PC-9 (cell line): ENCODE measurements at regions of chr19 and their contacts with region 1.

Region 1: DNA sequence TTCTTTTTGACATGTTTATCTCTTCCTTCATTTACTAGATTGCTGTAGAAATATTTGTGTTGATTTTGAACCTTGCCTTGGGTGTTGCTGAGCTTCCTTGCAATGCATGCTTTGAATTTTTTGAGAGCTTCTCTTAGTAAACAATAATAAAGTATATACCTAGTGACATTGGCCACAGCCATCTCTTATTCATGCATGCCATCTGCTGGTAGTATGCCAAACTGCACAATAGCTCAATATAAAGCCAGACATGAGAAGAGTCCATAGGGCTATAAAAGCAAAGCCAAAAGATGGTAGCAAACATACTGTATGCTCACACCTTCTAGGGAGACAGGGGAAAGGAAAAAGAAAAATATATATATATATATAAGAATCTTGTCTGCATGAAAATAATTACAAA is 18.9 kb upstream of the ZSCAN5A start:
- DNase-seq: peak; percentile 61 to 66
- H3K4me3 ChIP-seq: no peak overlapping the region
- H3K27ac ChIP-seq: no peak overlapping the region
- H3K4me1 ChIP-seq: no peaks in the 10 kb centered on the region
- H3K27me3 ChIP-seq: peaks cover 41% of the 10 kb centered on the region
- CTCF ChIP-seq: peak; percentile 95

Region 2: GRCh38 chr19:54653181-54653809 is 1680.2 kb before region 1 on chr19:
- CTCF ChIA-PET with region 1: no interaction called
- POLR2A ChIA-PET with region 1: no interaction called
- intact Hi-C with region 1: loop called (anchors 5 kb)
- DNase-seq: no peak
- H3K4me3 ChIP-seq: no peak overlapping the region
- H3K27ac ChIP-seq: no peak overlapping the region
- H3K4me1 ChIP-seq: no peaks in the 10 kb centered on the region
- H3K27me3 ChIP-seq: peaks cover 43% of the 10 kb centered on the region
- CTCF ChIP-seq: peak; percentile 86

Region 3: GRCh38 chr19:56066152-56067023 is 267.1 kb before region 1 on chr19:
- CTCF ChIA-PET with region 1: interaction called, 36 read pairs
- POLR2A ChIA-PET with region 1: no interaction called
- intact Hi-C with region 1: loop called (anchors 1 kb)
- DNase-seq: peak; percentile 51 to 71
- H3K4me3 ChIP-seq: no peak overlapping the region
- H3K27ac ChIP-seq: no peak overlapping the region
- H3K4me1 ChIP-seq: no peaks in the 10 kb centered on the region
- H3K27me3 ChIP-seq: peaks cover 56% of the 10 kb centered on the region
- CTCF ChIP-seq: peak; percentile 94

Region 4: GRCh38 chr19:56080669-56081401 is 252.7 kb before region 1 on chr19:
- CTCF ChIA-PET with region 1: interaction called, 17 read pairs
- POLR2A ChIA-PET with region 1: no interaction called
- intact Hi-C with region 1: loop called (anchors 1 kb)
- DNase-seq: peak in 1 of 2 experiments; percentile 77
- H3K4me3 ChIP-seq: no peak overlapping the region
- H3K27ac ChIP-seq: no peak overlapping the region
- H3K4me1 ChIP-seq: no peaks in the 10 kb centered on the region
- H3K27me3 ChIP-seq: no peaks in the 10 kb centered on the region
- CTCF ChIP-seq: peak; percentile 64

Region 5: DNA sequence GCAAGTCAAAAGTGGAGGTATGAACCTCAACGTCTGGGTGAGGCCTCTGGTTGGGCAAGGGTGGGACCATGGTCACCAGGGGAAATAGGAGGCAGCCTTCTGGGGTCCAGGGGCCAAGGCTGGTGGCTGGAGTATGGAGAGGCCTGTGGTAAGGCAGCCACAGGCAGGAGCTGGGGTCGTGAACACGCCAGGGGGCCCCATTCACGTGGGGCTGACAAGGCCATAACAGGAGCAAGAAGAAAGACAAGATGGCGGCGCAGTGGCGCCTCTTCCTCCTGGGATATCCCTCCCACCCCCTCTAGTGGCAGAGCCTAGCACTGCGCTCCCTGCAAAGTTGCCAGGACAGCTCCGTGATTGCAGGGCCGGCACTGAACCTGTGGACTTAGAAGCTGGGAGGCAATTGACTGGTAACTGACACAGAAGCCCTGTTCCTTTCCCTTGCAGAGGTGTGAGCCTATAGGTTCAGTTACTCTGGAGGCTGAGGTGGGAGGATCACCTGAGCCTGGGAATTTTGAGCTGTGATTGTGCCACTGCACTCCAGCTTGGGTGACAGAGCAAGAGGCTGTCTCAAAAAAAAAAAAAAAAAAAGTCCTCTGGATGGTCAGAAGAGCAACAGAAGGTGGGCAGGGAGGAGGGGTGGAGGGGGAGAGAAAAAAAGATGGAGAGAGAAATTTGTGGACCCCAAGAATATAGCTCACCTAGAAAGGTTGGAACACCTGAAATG is 80.6 kb before region 1 on chr19:
- CTCF ChIA-PET with region 1: interaction called, 87 read pairs
- POLR2A ChIA-PET with region 1: no interaction called
- intact Hi-C with region 1: loop called (anchors 1 kb)
- DNase-seq: peak; percentile 56 to 82
- H3K4me3 ChIP-seq: no peak overlapping the region
- H3K27ac ChIP-seq: no peak overlapping the region
- H3K4me1 ChIP-seq: no peaks in the 10 kb centered on the region
- H3K27me3 ChIP-seq: no peaks in the 10 kb centered on the region
- CTCF ChIP-seq: peak; percentile 89

Region 6: GRCh38 chr19:56261145-56261544 is 72.4 kb before region 1 on chr19:
- CTCF ChIA-PET with region 1: interaction called, 6 read pairs
- POLR2A ChIA-PET with region 1: interaction called, 11 read pairs
- intact Hi-C with region 1: no loop called
- DNase-seq: no peak
- H3K4me3 ChIP-seq: no peak overlapping the region
- H3K27ac ChIP-seq: no peak overlapping the region
- H3K4me1 ChIP-seq: no peaks in the 10 kb centered on the region
- H3K27me3 ChIP-seq: no peaks in the 10 kb centered on the region
- CTCF ChIP-seq: no peak